Sigmoid colon (tissue), 7 donors: ENCODE measurements at regions of chr1 and their contacts with region 1.

Region 1: DNA sequence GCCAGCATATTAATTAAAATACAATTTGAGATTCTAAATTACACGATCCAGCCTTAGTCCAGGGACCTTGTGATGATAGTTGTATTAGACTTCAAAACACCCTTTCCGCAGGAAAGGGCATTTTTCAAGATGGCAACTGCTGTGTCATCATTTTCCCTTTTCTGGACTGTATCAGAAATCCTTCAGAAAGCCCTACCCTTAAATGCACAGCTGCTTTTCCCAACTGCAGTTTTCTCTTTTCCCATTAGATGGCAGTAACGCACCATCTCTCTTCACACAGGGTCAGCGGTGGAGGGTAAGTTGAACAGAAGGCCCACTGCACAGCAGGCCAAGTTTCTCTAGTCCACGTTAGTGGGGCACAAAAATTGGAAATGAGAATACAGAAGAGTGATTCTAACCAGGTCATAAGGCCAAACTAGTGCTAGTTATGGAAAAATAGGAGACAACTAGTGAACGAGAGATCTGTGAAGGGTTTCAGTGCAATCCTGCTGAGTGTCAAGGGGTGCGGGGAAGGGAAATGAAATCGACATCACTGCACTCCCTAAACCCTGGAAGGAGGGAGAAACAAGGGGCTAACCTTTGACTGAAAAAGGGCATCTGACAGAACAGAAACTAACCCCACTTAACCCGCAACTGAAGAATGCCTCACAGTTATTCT is 22.1 kb upstream of the TDRD10 start:
- DNase-seq: peak; percentile 81
- H3K4me3 ChIP-seq: peak overlapping the region in 1 of 4 donors; percentile 6
- H3K27ac ChIP-seq: peak overlapping the region in 2 of 4 donors; percentile 32 to 54
- H3K4me1 ChIP-seq: peaks cover 0 to 10% (median 2%) of the 10 kb centered on the region in 4 donors
- H3K27me3 ChIP-seq: no peaks in the 10 kb centered on the region
- CTCF ChIP-seq: peak; percentile 94 to 97 (median 96)
- EP300 ChIP-seq: no peak
- POLR2A ChIP-seq: no peak

Region 2: DNA sequence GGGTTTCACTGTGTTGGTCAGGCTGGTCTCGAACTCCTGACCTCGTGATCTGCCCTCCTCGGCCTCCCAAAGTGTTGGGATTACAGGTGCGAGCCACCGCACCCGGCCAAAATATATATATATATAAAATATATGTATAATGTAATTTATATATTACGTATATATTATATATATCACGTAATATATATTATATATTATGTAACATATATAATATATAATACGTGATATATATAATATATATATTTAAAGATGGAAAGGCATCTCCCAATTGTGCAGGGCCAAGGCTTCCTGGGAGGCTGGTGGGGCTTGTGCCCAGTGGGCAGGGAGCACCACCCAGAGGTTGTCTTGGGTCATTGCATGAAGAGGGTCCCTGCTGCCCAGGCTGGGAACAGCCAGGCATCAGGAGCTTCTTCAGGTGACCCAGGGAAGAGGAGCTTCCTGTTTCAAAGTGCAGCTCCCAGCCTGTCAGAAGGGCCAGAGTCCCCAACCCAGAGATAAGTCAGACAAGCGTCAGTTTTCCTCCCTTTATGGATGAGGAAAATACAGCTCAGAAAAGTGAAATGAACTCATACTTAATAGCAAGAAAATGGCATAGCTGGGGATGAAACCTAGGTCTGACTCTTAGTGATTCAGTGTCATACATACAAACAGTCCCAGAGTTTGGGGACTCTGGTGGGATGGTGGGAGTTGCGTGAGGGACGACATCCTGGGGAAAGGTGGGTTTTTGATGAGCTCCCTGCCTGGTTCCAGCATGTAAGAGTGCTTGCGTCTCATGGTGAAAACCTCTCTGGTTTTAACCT is 66.6 kb after region 1 on chr1:
- intact Hi-C with region 1: loop called (anchors 2 kb)
- DNase-seq: peak; percentile 75
- H3K4me3 ChIP-seq: no peak overlapping the region
- H3K27ac ChIP-seq: no peak overlapping the region
- H3K4me1 ChIP-seq: peaks cover 0 to 15% (median 6%) of the 10 kb centered on the region in 4 donors
- H3K27me3 ChIP-seq: peaks cover 0 to 7% (median 0%) of the 10 kb centered on the region in 3 donors
- CTCF ChIP-seq: peak; percentile 39 to 68 (median 54)
- EP300 ChIP-seq: no peak
- POLR2A ChIP-seq: no peak

Region 3: GRCh38 chr1:154695985-154696384 is 216.1 kb after region 1 on chr1:
- intact Hi-C with region 1: no loop called
- DNase-seq: no peak
- H3K4me3 ChIP-seq: no peak overlapping the region
- H3K27ac ChIP-seq: no peak overlapping the region
- H3K4me1 ChIP-seq: no peaks in the 10 kb centered on the region
- H3K27me3 ChIP-seq: no peaks in the 10 kb centered on the region
- CTCF ChIP-seq: no peak
- EP300 ChIP-seq: no peak
- POLR2A ChIP-seq: no peak

Region 4: DNA sequence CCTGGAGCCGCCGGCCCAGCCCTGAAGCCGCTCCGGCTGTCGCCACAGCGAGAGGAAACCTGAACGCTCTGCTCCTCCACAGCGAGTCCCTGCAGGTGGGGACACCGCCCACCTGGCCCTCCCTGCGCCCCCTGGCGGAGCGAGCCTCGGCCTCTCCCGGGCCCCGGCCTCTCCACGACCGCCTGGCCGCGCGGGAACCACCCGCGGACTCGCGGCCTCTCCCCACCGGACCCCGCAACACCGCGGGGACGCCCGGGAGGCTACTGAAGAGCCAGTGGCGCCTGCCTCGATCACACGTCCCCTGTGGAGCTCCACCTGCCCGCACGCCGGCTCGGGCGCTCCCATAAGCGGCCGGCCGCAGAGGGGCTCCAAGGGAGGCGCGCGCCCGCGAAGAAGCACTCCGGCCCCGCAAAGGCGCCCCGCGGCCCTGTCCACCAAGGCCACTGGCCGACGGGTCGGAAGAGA is 280.6 kb after region 1 on chr1:
- intact Hi-C with region 1: loop called (anchors 5 kb)
- DNase-seq: peak; percentile 68
- H3K4me3 ChIP-seq: peak overlapping the region in 3 of 4 donors; percentile 21 to 47 (median 37)
- H3K27ac ChIP-seq: no peak overlapping the region
- H3K4me1 ChIP-seq: peaks cover 0 to 10% (median 8%) of the 10 kb centered on the region in 4 donors
- H3K27me3 ChIP-seq: peaks cover 0 to 20% (median 8%) of the 10 kb centered on the region in 3 donors
- CTCF ChIP-seq: peak; percentile 23 to 74 (median 53)
- EP300 ChIP-seq: no peak
- POLR2A ChIP-seq: no peak

Region 5: DNA sequence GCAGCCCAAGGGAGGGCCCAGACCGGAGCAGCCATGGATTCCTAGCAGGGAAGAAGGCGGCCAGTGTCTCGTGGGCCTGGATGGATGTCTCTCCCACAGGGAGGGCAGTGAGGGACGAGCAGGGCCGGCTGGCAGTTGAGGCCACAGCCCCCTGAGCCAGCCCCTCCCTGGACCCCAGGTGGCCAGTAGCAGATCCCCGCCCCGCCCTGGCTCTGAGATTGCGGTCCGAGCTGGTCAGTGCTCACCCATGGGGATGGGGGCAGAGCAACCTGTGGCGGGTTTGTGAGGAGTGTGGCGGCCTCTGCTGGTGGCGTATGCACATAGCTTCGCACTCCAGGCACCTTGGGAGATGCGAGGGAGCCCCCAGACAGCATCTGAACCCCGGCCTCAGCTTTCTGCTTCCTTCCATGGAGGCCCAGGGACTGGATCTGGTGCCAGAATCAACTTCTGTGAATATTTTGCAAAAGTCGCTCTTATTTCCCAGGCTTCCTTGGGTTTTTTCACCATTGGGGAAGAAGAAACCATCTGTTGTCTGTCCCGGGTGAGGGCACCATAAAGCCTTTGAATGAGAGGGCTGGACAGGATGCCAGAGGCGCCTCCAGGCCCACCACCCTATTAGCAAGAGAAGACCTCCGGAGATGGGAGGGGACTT is 398.6 kb after region 1 on chr1:
- intact Hi-C with region 1: loop called (anchors 2 kb)
- DNase-seq: peak; percentile 89
- H3K4me3 ChIP-seq: no peak overlapping the region
- H3K27ac ChIP-seq: no peak overlapping the region
- H3K4me1 ChIP-seq: peaks cover 0 to 6% (median 0%) of the 10 kb centered on the region in 4 donors
- H3K27me3 ChIP-seq: peaks cover 0 to 4% (median 0%) of the 10 kb centered on the region in 3 donors
- CTCF ChIP-seq: peak; percentile 80 to 90 (median 84)
- EP300 ChIP-seq: no peak
- POLR2A ChIP-seq: no peak